ENCODE measurements at regions of chr1 and their contacts with region 1.

Region 1: GRCh38 chr1:19169642-19170041 is 40.4 kb downstream of the UBR4 start:
- DNase-seq: no peak
- ATAC-seq: no peak

Region 2: GRCh38 chr1:19139711-19140110 is 29.9 kb before region 1 on chr1:
- intact Hi-C with region 1: loop called (anchors 5 kb)
- DNase-seq: no peak
- ATAC-seq: no peak